ENCODE measurements at regions of chr11 and their contacts with region 1.

Region 1: GRCh38 chr11:67373925-67374618 is 674 bp upstream of the CLCF1 start:
- DNase-seq: peak; percentile 51 to 80 (median 75)
- H3K4me3 ChIP-seq: peak overlapping the region in 6 of 7 experiments; percentile 35 to 70 (median 52)
- H3K27ac ChIP-seq: peak overlapping the region in 1 of 2 experiments; percentile 72
- H3K4me1 ChIP-seq: peaks cover 0 to 63% (median 59%) of the 10 kb centered on the region in 4 experiments
- H3K27me3 ChIP-seq: peaks cover 0 to 18% (median 0%) of the 10 kb centered on the region in 5 experiments

Region 2: DNA sequence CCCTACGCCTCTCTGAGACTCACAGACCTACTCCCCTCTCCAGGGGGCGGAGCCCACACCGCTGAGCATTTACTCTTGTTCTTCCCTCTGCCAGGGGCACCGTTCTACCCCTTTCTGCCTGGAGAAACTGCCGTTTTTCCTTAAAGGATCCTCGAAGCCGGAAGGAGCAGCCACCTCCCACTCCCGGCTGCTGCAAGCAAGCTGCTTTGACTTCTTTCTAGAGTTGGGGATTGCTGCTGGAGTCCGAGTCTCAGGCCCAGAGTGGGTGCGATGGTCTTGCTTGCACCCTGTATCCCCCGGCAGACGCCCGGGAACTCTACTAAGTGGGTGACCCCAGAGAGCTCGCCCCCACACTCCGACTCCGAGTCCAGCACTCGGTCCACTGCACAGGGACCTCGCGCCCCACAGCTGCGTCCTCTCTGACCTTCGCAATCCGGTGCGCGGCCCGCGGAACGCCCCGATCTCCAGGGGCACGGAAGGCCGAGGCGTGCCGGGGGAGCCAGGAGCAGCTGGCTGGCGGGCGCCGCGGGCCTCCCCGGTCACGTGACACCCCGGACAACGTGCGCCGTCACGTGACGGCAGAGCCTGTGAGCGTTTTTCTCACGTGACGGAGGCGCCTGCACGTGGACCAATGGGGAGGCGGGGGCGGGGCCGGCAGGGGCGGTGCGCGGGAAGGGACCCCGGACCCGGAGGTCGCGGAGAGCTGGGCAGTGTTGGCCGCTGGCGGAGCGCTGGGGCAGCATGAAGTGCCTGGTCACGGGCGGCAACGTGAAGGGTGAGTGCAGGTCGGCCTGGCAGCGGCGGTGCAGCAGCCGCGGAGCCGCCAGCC is 17.4 kb after region 1 on chr11 and contains the start of gene RAD9A:
- CTCF ChIA-PET with region 1: interaction called, 15 read pairs
- POLR2A ChIA-PET with region 1: interaction called, 3 read pairs
- DNase-seq: peak; percentile 93 to 96 (median 95)
- H3K4me3 ChIP-seq: peak within 1 kb of the TSS; percentile 46 to 90 (median 74)
- H3K27ac ChIP-seq: peak within 1 kb of the TSS; percentile 50 to 79
- H3K4me1 ChIP-seq: peaks cover 3 to 47% (median 23%) of the 10 kb centered on the region in 4 experiments
- H3K27me3 ChIP-seq: no peaks in the 10 kb centered on the region

Region 3: GRCh38 chr11:67428915-67429668 is 55.0 kb after region 1 on chr11:
- CTCF ChIA-PET with region 1: no interaction called
- POLR2A ChIA-PET with region 1: no interaction called
- DNase-seq: no peak
- H3K4me3 ChIP-seq: peak overlapping the region; percentile 86 to 99 (median 94)
- H3K27ac ChIP-seq: peak overlapping the region; percentile 90 to 95
- H3K4me1 ChIP-seq: peaks cover 3 to 37% (median 27%) of the 10 kb centered on the region in 4 experiments
- H3K27me3 ChIP-seq: no peaks in the 10 kb centered on the region

Measured in common myeloid progenitor, CD34-positive (primary cell).